Caco-2 (cell line): ENCODE measurements at regions of chr5 and their contacts with region 1.

Region 1: DNA sequence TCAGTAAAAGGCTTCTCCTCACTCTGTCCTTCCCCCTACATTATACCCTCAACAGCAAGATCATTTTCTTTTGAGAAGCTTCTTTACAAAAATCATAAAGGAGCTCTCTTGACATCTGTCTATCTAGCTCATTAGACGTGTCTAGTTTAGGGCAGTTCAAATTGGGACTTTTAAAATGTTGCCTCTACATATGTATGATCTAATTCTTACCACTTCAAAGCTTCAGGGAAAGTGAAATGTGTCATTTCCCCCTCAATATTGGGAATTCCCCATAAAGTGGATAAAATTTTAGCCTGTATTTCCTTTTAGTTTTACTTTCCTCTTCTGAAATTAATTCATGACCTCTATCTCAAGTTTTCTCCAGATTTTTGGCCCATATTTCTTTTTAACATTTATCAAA is 323.7 kb downstream of the ARRDC3 start:
- DNase-seq: no peak
- H3K4me3 ChIP-seq: no peak overlapping the region
- H3K4me3 Mint-ChIP-seq: no peak overlapping the region
- H3K27ac Mint-ChIP-seq: no peak overlapping the region
- H3K4me1 ChIP-seq: no peaks in the 10 kb centered on the region
- H3K4me1 Mint-ChIP-seq: no peaks in the 10 kb centered on the region
- H3K27me3 ChIP-seq: no peaks in the 10 kb centered on the region
- H3K27me3 Mint-ChIP-seq: no peaks in the 10 kb centered on the region
- CTCF ChIP-seq: no peak

Region 2: GRCh38 chr5:90983148-90983547 is 76.3 kb before region 1 on chr5:
- CTCF ChIA-PET with region 1: no interaction called
- POLR2A ChIA-PET with region 1: no interaction called
- intact Hi-C with region 1: no loop called
- DNase-seq: no peak
- H3K4me3 ChIP-seq: no peak overlapping the region
- H3K4me3 Mint-ChIP-seq: no peak overlapping the region
- H3K27ac Mint-ChIP-seq: no peak overlapping the region
- H3K4me1 ChIP-seq: no peaks in the 10 kb centered on the region
- H3K4me1 Mint-ChIP-seq: no peaks in the 10 kb centered on the region
- H3K27me3 ChIP-seq: no peaks in the 10 kb centered on the region
- H3K27me3 Mint-ChIP-seq: no peaks in the 10 kb centered on the region
- CTCF ChIP-seq: no peak

Region 3: GRCh38 chr5:91042936-91043255 is 16.5 kb before region 1 on chr5:
- CTCF ChIA-PET with region 1: no interaction called
- POLR2A ChIA-PET with region 1: no interaction called
- intact Hi-C with region 1: loop called (anchors 2 kb)
- DNase-seq: no peak
- H3K4me3 ChIP-seq: no peak overlapping the region
- H3K4me3 Mint-ChIP-seq: no peak overlapping the region
- H3K27ac Mint-ChIP-seq: no peak overlapping the region
- H3K4me1 ChIP-seq: no peaks in the 10 kb centered on the region; the same call in 1 of the 2 replicates
- H3K4me1 Mint-ChIP-seq: no peaks in the 10 kb centered on the region
- H3K27me3 ChIP-seq: no peaks in the 10 kb centered on the region
- H3K27me3 Mint-ChIP-seq: no peaks in the 10 kb centered on the region
- CTCF ChIP-seq: no peak

Region 4: DNA sequence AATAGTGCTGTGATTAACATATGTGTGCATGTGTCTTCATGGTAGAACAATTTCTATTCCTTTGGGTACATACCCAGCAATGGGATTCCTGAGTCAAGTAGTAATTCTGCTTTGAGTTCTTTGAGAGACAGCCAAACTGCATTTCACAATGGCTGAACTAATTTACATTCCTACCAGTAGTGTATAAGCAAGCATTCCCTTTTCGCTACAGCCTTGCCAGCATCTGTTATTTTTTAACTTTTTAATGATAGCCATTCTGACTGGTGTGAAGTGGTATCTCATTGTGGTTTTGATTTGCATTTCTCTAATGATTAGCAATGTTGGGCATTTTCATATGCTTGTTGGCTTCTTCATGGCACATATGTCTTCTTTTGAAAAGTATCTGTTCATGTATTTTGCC is 15.2 kb after region 1 on chr5:
- CTCF ChIA-PET with region 1: no interaction called
- POLR2A ChIA-PET with region 1: no interaction called
- intact Hi-C with region 1: no loop called
- DNase-seq: peak in 1 of 2 experiments; percentile 18
- H3K4me3 ChIP-seq: no peak overlapping the region
- H3K4me3 Mint-ChIP-seq: no peak overlapping the region
- H3K27ac Mint-ChIP-seq: no peak overlapping the region
- H3K4me1 ChIP-seq: no peaks in the 10 kb centered on the region
- H3K4me1 Mint-ChIP-seq: no peaks in the 10 kb centered on the region
- H3K27me3 ChIP-seq: no peaks in the 10 kb centered on the region
- H3K27me3 Mint-ChIP-seq: no peaks in the 10 kb centered on the region
- CTCF ChIP-seq: peak in 1 of 2 experiments; percentile 1

Region 5: GRCh38 chr5:91189480-91190300 is 130.3 kb after region 1 on chr5:
- CTCF ChIA-PET with region 1: no interaction called
- POLR2A ChIA-PET with region 1: no interaction called
- intact Hi-C with region 1: no loop called
- DNase-seq: peak; percentile 34 to 43
- H3K4me3 ChIP-seq: no peak overlapping the region
- H3K4me3 Mint-ChIP-seq: no peak overlapping the region
- H3K27ac Mint-ChIP-seq: peak overlapping the region; percentile 51
- H3K4me1 ChIP-seq: peaks cover 34% of the 10 kb centered on the region
- H3K4me1 Mint-ChIP-seq: peaks cover 35% of the 10 kb centered on the region
- H3K27me3 ChIP-seq: no peaks in the 10 kb centered on the region
- H3K27me3 Mint-ChIP-seq: no peaks in the 10 kb centered on the region
- CTCF ChIP-seq: no peak